ENCODE measurements at regions of chr11 and their contacts with region 1.

Region 1: DNA sequence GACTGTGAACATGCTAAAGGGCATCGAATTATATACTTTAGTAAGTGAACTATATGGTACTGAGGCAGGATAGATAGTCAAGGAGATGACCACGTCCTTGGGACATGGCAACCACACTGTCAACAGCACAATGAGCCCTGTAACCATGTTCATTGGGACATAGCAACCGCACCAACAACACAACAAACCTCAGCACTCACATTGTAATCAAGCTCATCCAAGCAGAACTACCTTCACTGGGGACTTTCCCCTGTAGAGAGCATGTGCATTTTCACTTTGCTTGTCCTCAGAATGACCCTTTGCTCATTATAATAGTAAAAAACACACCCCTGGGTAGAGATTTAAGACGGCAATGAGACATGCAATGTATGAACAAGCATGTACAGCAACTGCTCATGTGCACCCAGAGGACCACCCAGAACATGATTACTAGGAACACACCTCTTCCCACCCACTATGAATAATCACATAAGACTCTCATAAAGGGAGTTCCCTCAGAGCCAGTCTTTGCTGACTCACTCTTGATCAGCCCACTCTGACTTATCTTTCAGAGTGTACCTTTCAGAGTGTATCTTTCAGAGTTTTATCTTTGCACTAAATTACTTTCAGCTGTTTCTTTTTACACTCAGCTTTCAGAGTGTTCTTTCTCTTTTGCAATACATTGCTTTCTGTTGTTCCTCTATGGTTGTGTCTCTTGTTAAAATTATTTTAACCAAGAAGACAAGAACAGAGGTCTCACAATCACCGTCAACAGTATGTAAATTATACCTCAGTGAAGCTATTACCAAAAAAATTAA is 4.1 kb upstream of the PLAAT2 start:
- DNase-seq: peak; percentile 72
- ATAC-seq: peak; percentile 84
- H3K4me3 Mint-ChIP-seq: peak overlapping the region; percentile 45
- H3K27ac Mint-ChIP-seq: peak overlapping the region; percentile 94
- H3K4me1 Mint-ChIP-seq: peaks cover 50% of the 10 kb centered on the region
- H3K27me3 Mint-ChIP-seq: no peaks in the 10 kb centered on the region

Region 2: GRCh38 chr11:62556108-62556871 is 1011.0 kb before region 1 on chr11:
- CTCF ChIA-PET with region 1: no interaction called
- POLR2A ChIA-PET with region 1: no interaction called
- intact Hi-C with region 1: loop called in 1 of 2 experiments (anchors 5 kb)
- DNase-seq: peak; percentile 92
- ATAC-seq: peak; percentile 65
- H3K4me3 Mint-ChIP-seq: peak overlapping the region; percentile 54
- H3K27ac Mint-ChIP-seq: peak overlapping the region; percentile 92
- H3K4me1 Mint-ChIP-seq: peaks cover 98% of the 10 kb centered on the region
- H3K27me3 Mint-ChIP-seq: no peaks in the 10 kb centered on the region

Region 3: DNA sequence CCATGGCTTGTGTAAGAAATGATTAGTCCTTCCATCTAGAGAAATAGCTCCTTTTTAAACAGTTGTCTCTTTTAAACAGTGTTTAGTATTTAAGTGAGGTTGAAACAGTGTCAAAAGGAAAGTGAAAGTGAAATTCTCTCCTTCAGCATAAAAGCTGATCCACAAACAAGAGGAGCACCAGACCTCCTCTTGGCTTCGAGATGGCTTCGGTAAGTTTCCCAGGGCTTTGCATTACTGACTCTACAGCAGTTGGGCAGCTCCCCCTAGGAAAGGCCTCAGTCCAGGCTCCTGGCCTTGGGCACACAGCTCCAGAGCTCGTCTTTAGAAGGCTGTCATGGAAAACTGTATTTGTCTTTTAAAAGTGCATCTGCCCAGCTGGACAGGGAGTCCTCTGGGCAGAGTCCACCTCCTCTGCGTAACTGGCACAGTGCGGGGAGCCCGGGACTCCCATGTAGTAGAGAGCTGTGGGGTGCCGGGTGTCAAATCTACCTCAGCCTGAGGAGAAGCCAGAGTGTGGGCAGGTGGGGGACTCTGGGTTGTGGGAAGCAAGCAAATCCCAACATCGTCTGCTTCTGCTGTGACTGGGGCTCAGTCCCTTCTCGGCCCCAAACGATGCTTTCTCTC is 30.5 kb before region 1 on chr11 and contains the start of gene PLAAT4:
- CTCF ChIA-PET with region 1: interaction called, 4 read pairs
- POLR2A ChIA-PET with region 1: interaction called, 18 read pairs
- intact Hi-C with region 1: loop called (anchors 1 kb)
- DNase-seq: peak; percentile 44
- ATAC-seq: peak; percentile 65
- H3K4me3 Mint-ChIP-seq: peak within 1 kb of the TSS; percentile 81
- H3K27ac Mint-ChIP-seq: peak within 1 kb of the TSS; percentile 94
- H3K4me1 Mint-ChIP-seq: peaks cover 81% of the 10 kb centered on the region
- H3K27me3 Mint-ChIP-seq: no peaks in the 10 kb centered on the region
- total RNA-seq, gene PLAAT4: 16.8 to 18.7 TPM

Region 4: DNA sequence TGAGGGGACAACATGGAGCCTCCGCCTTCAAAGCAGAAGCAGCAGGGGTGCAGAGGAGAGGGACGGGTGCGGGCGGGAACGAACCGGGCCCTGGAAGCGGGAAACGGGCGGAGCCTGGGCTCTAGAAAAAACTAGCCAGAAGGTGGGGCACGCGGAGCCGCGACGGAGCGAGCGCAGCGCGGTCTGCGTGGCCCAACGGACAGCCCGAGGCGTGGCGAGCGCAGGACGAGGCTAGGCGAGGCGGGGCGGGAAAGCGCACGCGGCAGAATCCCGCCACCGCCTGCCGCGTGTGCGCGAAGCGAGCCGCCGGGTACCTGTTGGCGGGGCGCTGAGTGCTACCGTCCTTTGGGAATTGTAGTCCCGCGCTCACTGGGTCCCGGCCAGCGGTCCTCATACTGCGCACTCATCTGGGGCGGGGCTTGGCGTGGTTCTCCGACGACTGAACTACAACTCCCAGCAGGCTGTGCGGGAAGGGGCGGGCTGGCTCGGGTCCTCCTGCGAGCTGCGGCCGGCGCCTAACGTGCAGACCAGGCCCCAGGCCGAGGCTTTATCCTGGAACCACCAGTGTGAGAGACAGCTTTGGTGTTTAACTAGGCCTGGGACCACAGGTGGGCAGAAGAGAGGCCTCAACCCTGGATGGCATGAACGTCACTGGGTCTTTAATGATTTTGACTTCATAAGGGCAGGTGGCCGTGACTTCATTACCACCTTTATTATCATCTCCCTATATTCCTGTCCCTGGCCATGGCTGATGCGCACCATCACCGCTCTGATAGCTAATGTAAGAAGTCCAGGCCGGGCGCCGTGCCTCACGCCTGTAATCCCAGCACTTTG is 104.3 kb after region 1 on chr11 and contains the start of gene ATL3:
- CTCF ChIA-PET with region 1: no interaction called
- POLR2A ChIA-PET with region 1: no interaction called
- intact Hi-C with region 1: loop called in 1 of 2 experiments (anchors 1 kb)
- DNase-seq: peak; percentile 96
- ATAC-seq: peak; percentile 86
- H3K4me3 Mint-ChIP-seq: peak within 1 kb of the TSS; percentile 85
- H3K27ac Mint-ChIP-seq: peak within 1 kb of the TSS; percentile 90
- H3K4me1 Mint-ChIP-seq: peaks cover 45% of the 10 kb centered on the region
- H3K27me3 Mint-ChIP-seq: no peaks in the 10 kb centered on the region
- total RNA-seq, gene ATL3: 18.9 to 25.7 TPM

Region 5: DNA sequence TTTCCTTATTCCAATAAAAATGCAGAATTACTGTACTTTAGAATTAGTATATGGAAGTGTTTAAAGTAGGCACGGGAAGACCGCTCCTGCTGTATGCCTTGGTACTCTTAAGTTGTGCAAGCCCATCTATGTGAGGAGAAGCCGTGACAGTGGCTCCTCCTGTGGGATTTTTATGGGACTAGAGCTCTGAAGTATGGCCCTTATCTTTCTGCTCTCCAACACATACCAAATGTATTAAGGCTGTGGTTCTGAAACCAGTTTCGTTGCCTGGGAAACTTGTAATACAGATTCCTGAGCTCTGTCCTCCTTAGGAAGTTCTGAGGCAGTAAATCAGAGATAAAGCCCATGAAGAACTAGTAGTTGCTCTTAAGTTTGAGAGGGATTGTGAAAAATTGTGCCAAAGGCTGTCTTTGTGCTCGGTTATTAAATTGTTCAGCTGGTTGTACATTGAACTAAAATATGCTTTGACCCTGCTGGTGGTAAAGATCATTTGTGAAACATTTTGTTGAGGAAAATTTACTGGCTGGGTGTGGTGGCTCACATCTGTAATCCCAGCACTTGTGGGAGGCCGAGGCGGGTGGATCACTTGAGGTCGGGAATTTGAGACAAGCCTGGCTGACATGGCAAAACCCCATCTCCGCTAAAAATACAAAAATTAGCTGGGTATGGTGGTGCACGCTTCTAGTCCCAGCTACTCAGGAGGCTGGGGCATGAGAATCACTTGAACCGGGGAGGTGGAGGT is 143.4 kb after region 1 on chr11:
- CTCF ChIA-PET with region 1: no interaction called
- POLR2A ChIA-PET with region 1: no interaction called
- intact Hi-C with region 1: no loop called
- DNase-seq: no peak
- ATAC-seq: no peak
- H3K4me3 Mint-ChIP-seq: no peak overlapping the region
- H3K27ac Mint-ChIP-seq: no peak overlapping the region
- H3K4me1 Mint-ChIP-seq: peaks cover 5% of the 10 kb centered on the region
- H3K27me3 Mint-ChIP-seq: no peaks in the 10 kb centered on the region

Region 6: DNA sequence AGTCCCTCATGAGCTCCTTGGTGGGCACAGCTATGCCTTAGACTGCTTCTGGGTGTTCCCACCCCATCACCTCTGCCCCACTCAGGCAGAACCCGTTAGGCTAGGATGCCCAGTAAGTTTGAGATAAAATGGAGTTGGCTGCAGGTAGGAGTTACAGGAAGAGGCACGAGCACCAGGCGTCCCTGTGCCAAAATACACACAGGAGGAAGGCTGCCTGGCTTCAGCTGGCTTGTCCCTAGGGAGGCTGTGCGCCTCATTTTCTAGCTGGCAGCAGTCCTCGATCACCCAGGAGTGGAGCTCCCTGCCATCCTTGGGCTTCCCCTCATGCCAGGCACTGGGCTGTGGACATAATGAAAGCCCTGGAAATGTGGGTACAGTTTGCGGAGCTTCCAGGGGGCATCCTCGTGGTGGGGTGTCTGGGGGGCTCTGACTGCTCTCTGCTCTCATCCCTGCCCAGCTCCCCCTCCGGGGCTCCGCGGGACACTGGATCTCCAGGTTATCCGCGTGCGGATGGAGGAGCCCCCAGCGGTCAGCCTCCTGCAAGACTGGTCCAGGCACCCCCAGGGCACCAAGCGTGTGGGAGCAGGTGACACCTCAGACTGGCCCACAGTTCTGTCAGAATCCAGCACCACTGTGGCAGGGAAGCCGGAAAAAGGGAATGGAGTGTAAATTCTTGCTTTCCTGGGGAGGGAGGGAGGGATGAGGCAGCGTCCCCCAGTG is 259.4 kb after region 1 on chr11:
- CTCF ChIA-PET with region 1: no interaction called
- POLR2A ChIA-PET with region 1: no interaction called
- intact Hi-C with region 1: no loop called
- DNase-seq: no peak
- ATAC-seq: no peak
- H3K4me3 Mint-ChIP-seq: no peak overlapping the region
- H3K27ac Mint-ChIP-seq: no peak overlapping the region
- H3K4me1 Mint-ChIP-seq: no peaks in the 10 kb centered on the region
- H3K27me3 Mint-ChIP-seq: no peaks in the 10 kb centered on the region

Region 7: DNA sequence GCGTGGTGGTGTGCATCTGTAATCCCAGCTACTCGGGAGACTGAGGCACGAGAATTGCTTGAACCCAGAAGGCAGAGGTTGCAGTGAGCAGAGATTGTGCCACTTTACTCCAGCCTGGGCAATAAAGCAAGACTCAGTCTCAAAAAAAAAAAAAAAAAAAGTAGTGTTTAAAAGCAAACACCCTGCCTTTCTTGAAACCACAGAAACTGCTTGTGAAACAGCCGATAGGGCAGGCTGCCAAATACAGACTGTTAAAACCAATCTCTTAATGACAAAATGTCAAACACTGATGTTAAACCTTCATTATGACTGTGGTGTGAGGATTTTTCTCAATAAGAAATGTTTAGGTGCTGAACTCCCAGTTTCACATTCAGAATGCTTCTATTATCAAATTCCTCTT is 299.0 kb after region 1 on chr11:
- CTCF ChIA-PET with region 1: no interaction called
- POLR2A ChIA-PET with region 1: no interaction called
- intact Hi-C with region 1: loop called in 1 of 2 experiments (anchors 10 kb)
- DNase-seq: peak; percentile 92
- ATAC-seq: peak; percentile 81
- H3K4me3 Mint-ChIP-seq: peak overlapping the region; percentile 28
- H3K27ac Mint-ChIP-seq: peak overlapping the region; percentile 62
- H3K4me1 Mint-ChIP-seq: peaks cover 79% of the 10 kb centered on the region
- H3K27me3 Mint-ChIP-seq: no peaks in the 10 kb centered on the region